OCI-LY7 (cell line): ENCODE measurements at regions of chrX and their contacts with region 1.

Region 1: GRCh38 chrX:2595258-2595657 is 94.5 kb upstream of the DHRSX start:
- DNase-seq: no peak
- H3K4me3 ChIP-seq: no peak overlapping the region
- H3K27ac ChIP-seq: no peak overlapping the region
- H3K4me1 ChIP-seq: peaks cover 17% of the 10 kb centered on the region
- CTCF ChIP-seq: no peak

Region 2: DNA sequence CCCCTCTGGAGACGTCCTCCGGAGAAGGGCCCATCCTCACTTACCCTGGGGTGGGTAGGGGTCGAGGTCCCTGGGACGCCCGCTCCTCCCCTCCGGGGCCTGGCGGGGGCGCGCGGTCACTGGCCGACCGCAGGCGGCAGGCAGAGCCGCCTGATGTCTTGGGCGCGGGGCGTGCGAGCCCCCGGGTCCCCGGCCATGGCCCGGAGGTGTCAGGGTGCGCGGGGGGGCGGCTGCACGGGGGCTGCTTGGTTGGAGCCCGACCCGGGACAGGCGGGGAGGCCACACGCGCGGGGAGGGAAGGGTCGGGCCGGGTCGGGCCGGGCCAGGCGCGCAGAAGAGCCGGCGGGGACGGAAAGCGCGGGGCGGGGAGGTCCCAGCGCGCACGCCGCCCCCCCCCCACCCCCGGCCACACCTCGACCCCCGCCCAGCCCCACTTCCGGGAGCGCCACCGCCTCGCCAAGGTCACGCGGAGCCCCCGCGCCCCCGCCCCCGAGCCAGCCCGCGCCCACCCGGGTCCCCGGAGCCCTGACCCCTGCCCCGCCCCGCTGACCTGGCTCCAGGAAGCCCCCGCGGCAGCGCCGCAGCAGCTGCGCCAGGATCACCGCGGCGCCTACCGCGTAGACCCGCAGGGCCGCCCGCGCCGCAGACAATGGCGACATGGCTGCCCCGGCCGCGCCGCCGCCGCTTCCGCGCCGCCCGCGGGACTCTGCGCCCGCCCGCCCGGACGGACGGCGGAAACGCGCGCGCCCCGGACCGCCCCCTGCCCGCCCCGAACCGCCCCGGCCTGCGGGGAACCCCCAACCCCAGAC is 94.8 kb before region 1 on chrX and contains the starts of genes DHRSX and ZBED1:
- CTCF ChIA-PET with region 1: no interaction called
- POLR2A ChIA-PET with region 1: no interaction called
- intact Hi-C with region 1: loop called (anchors 1 kb)
- DNase-seq: peak; percentile 69
- H3K4me3 ChIP-seq: peak within 1 kb of the TSS; percentile 86
- H3K27ac ChIP-seq: peak within 1 kb of the TSS; percentile 71
- H3K4me1 ChIP-seq: peaks cover 60% of the 10 kb centered on the region
- CTCF ChIP-seq: peak; percentile 66
- total RNA-seq, gene DHRSX: 30.9 and 33.8 TPM in 2 replicates
- total RNA-seq, gene ZBED1: 51.1 and 58.7 TPM in 2 replicates